ENCODE measurements at regions of chr9 and their contacts with region 1.

Region 1: DNA sequence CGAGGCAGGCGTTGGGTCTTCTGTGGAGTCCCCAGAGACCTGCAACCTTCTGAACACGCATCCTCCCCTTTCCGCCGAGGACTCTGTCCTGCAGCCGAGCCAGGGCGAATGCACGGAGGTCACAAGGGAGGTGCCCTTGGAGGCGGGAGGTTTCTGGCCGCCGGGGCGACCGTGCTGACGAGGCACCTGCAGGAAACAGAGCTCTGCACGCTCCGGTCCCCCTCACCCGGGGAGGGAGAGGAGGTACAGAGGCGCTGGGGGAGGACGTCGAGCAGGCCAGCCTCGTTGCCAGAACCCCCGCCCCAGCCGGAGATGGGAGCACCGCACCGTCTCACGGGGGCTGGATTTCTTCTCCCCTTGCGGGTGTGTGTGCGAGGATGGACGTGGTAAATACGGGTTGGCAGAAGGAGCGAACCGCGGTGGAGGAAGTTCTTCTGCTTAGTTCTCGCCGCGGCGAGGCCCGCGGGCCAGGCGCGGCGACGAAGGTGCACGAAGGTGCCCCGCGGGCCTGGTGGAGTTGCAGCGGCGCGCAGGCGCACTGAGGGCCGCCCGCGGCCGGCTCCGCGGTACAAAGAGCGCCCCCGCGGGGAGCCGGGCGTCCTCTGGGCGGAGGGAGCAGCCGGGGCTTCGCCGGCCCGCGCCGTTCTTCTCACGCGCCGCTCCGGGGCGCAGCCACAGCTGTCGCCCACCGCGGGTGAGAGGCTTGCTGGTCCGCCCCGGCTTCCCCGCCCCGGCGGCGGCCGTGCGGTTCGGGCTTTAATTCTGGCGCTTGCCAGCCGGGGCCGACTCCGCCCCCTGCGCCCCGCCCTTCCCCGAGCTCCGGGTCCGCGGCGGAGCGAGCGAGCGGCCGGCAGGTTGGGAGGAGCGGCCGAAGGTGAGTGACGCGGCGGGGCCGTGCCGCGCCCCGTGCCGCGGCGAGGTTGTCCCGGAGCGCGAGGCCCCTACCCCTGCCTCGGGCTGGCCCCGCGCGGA is 289.5 kb downstream of the DOCK8 start:
- DNase-seq: no peak
- ATAC-seq: peak; percentile 93
- H3K4me3 ChIP-seq: peak within 1 kb of the TSS; percentile 46 to 58
- H3K27ac ChIP-seq: peak within 1 kb of the TSS; percentile 68
- H3K4me1 ChIP-seq: no peaks in the 10 kb centered on the region; the same call in 1 of the 2 replicates
- H3K27me3 ChIP-seq: no peaks in the 10 kb centered on the region
- CTCF ChIP-seq: peak; percentile 47

Region 2: GRCh38 chr9:242461-243080 is 261.6 kb before region 1 on chr9:
- CTCF ChIA-PET with region 1: no interaction called
- POLR2A ChIA-PET with region 1: interaction called, 10 read pairs
- in situ Hi-C with region 1: no loop called
- intact Hi-C with region 1: no loop called
- DNase-seq: no peak
- ATAC-seq: no peak
- H3K4me3 ChIP-seq: no peak overlapping the region
- H3K27ac ChIP-seq: no peak overlapping the region
- H3K4me1 ChIP-seq: no peaks in the 10 kb centered on the region
- H3K27me3 ChIP-seq: no peaks in the 10 kb centered on the region
- CTCF ChIP-seq: no peak

Measured in Panc1 (cell line).